ENCODE measurements at regions of chr10 and their contacts with region 1.

Region 1: DNA sequence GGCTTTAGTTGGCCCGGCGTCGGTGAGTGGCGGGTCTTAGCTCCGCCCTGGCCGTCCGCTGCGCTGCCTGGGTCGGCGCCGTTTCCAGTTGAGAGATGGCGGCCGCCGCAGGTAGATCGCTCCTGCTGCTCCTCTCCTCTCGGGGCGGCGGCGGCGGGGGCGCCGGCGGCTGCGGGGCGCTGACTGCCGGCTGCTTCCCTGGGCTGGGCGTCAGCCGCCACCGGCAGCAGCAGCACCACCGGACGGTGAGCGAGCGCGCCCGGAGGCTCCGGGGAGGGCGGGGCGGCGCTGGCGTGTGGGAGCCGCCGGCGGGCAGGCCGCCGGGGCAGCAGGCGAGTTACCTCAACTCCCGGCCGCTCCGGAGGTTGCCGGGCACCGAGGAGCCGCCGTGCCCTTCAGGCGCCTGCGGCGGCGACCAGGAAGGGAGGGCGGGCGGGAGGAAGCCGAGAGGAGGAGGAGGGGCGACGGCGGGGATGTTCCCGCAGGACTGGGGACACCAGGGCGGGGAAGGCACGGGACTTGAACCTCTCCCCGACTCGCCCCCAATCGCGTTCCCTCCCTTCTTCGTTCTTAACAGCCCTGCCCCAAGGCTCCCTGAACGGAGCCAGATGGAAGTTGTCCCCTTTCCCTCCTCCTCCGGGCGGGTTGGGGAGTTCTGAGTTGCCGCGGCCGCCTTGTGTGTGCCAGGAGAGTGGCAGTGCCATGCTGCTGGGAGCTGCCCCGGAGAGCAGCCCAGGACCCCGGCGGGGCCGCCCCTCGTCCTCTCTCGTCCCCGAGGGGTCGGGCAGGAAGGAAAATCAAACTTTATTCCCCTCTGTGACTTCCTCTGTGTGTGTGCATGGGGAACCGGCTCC is at the start of gene MCU:
- DNase-seq: peak; percentile 95 to 97 (median 96)
- ATAC-seq: peak; percentile 99
- H3K4me3 ChIP-seq: peak within 1 kb of the TSS; percentile 71 to 97 (median 85)
- H3K27ac ChIP-seq: peak within 1 kb of the TSS; percentile 83 to 96 (median 93)
- H3K4me1 ChIP-seq: peaks cover 0 to 33% (median 21%) of the 10 kb centered on the region in 12 donors
- H3K27me3 ChIP-seq: no peaks in the 10 kb centered on the region
- CTCF ChIP-seq: no peak
- POLR2A ChIP-seq: peak in 1 of 2 donors; percentile 86
- total RNA-seq, gene MCU: 11.4 to 16.9 (median 13.7) TPM

Region 2: GRCh38 chr10:72625608-72626443 is 66.5 kb before region 1 on chr10 and contains the start of gene MICU1:
- intact Hi-C with region 1: loop called in 3 of 10 experiments (anchors 5 kb)
- DNase-seq: peak; percentile 95 to 97 (median 96)
- ATAC-seq: peak; percentile 100
- H3K4me3 ChIP-seq: peak within 1 kb of the TSS; percentile 51 to 98 (median 82)
- H3K27ac ChIP-seq: peak within 1 kb of the TSS in 11 of 12 donors; percentile 70 to 91 (median 82)
- H3K4me1 ChIP-seq: peaks cover 0 to 20% (median 8%) of the 10 kb centered on the region in 12 donors
- H3K27me3 ChIP-seq: no peaks in the 10 kb centered on the region
- CTCF ChIP-seq: no peak
- POLR2A ChIP-seq: peak in 1 of 2 donors; percentile 86
- total RNA-seq, gene MICU1: 38.2 to 54.2 (median 43.6) TPM

Region 3: DNA sequence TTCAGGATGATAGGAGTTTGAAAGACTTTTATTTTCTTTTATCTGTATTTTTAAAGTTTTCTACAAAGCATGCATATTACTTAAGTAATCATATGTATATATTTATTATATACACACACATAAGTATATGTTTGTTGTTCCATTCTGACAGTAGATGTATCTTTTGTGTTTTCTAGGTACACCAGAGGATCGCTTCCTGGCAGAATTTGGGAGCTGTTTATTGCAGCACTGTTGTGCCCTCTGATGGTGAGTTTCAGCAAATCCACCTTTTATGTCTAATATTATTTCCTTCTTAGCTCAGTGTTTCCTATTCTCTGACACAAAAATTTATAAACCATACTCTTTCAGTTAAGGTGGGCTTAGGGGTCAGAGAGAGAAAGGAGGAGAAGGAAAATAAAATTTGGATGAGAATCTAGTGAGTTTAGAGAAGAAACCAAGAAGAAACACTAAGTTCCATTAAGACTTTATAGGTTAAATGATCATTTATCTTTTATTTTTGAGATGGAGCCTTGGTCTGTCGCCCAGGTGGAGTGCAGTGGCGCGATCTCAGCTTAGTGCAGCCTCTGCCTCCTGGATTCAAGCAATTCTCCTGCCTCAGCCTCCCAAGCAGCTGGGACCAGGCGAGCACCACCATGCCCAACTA is 142.0 kb after region 1 on chr10:
- intact Hi-C with region 1: loop called (anchors 1 to 5 kb)
- DNase-seq: peak in 3 of 5 donors; percentile 27 to 50 (median 43)
- ATAC-seq: peak in 3 of 4 donors; percentile 63 to 85 (median 83)
- H3K4me3 ChIP-seq: no peak overlapping the region
- H3K27ac ChIP-seq: no peak overlapping the region
- H3K4me1 ChIP-seq: peaks cover 0 to 40% (median 11%) of the 10 kb centered on the region in 12 donors
- H3K27me3 ChIP-seq: no peaks in the 10 kb centered on the region
- CTCF ChIP-seq: peak; percentile 45 to 80 (median 70)
- POLR2A ChIP-seq: no peak

Region 4: GRCh38 chr10:73017955-73018480 is 325.7 kb after region 1 on chr10:
- intact Hi-C with region 1: loop called in 1 of 10 experiments (anchors 5 kb)
- DNase-seq: peak in 4 of 5 donors; percentile 19 to 69 (median 58)
- ATAC-seq: peak; percentile 78 to 87 (median 83)
- H3K4me3 ChIP-seq: no peak overlapping the region
- H3K27ac ChIP-seq: peak overlapping the region in 4 of 12 donors; percentile 23 to 48 (median 35)
- H3K4me1 ChIP-seq: peaks cover 0 to 44% (median 26%) of the 10 kb centered on the region in 12 donors
- H3K27me3 ChIP-seq: no peaks in the 10 kb centered on the region
- CTCF ChIP-seq: no peak
- POLR2A ChIP-seq: no peak

Measured in heart left ventricle (tissue), 16 donors.